ENCODE measurements at regions of chr3 and their contacts with region 1.

Region 1: GRCh38 chr3:5298453-5298852 is 110.9 kb downstream of the EDEM1 start:
- DNase-seq: peak; percentile 69
- ATAC-seq: peak; percentile 98
- H3K4me3 ChIP-seq: no peak overlapping the region
- H3K27ac ChIP-seq: no peak overlapping the region
- H3K4me1 ChIP-seq: peaks cover 14% of the 10 kb centered on the region
- H3K27me3 ChIP-seq: no peaks in the 10 kb centered on the region
- CTCF ChIP-seq: no peak
- EP300 ChIP-seq: peak; percentile 68 to 92; a peak in 3 of 4 replicates
- POLR2A ChIP-seq: no peak
- RAD21 ChIP-seq: no peak

Region 2: DNA sequence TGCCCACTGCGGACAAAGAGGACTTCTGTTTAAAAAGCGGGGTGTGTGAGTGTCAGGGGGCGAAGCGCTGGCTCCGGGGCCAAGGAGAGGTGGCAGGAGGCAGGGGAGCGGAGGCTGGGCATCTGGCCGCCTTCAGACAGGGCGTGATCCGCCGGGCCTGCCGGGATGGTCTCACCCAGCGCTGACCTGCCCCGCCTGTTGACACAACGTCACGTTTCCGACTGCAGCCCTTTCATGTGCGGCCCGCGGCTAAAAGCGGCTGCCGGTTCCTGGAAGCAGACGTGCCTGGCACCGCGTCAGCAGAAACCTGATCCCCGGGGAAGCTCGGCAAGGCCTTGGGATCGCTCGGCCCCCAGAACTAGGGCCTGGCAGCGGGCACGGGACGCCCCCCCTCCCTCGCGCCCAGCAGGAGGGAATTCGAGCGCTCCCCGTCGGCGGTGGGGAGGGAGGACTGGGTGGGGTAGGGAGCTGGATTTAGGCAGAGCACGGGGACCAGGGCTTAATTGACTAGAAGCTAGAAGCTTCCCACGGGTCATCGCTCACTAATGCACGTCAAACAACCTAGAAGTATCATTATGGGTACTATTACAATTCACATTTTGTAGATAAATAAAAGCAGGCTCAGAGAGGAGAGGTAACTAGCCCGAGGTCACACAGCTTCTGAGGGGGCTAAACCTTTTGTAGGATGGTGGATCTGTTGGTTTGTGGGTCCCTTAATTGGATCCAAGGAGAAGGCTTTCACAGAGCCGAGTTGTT is 311.5 kb before region 1 on chr3:
- CTCF ChIA-PET with region 1: no interaction called
- POLR2A ChIA-PET with region 1: no interaction called
- RAD21 ChIA-PET with region 1: no interaction called
- SMC1A ChIA-PET with region 1: no interaction called
- in situ Hi-C with region 1: no loop called
- intact Hi-C with region 1: no loop called
- DNase-seq: no peak
- ATAC-seq: peak; percentile 69
- H3K4me3 ChIP-seq: peak overlapping the region; percentile 70
- H3K27ac ChIP-seq: peak overlapping the region; percentile 86
- H3K4me1 ChIP-seq: peaks cover 38% of the 10 kb centered on the region
- H3K27me3 ChIP-seq: no peaks in the 10 kb centered on the region
- CTCF ChIP-seq: no peak
- EP300 ChIP-seq: 0 out of 4 replicates have a peak, but pooled peaks of 1 of the 2 experiments have one; percentile 58
- POLR2A ChIP-seq: peak; percentile 92
- RAD21 ChIP-seq: no peak; the same call in 1 of the 2 replicates

Region 3: GRCh38 chr3:5122030-5122740 is 176.3 kb before region 1 on chr3 and contains the start of gene ARL8B:
- CTCF ChIA-PET with region 1: interaction called, 5 read pairs
- POLR2A ChIA-PET with region 1: no interaction called
- RAD21 ChIA-PET with region 1: interaction called, 4 read pairs
- SMC1A ChIA-PET with region 1: interaction called, 12 read pairs
- in situ Hi-C with region 1: loop called (anchors 10 kb)
- intact Hi-C with region 1: no loop called
- DNase-seq: no peak
- ATAC-seq: peak; percentile 97
- H3K4me3 ChIP-seq: peak within 1 kb of the TSS; percentile 76
- H3K27ac ChIP-seq: peak within 1 kb of the TSS; percentile 78
- H3K4me1 ChIP-seq: no peaks in the 10 kb centered on the region
- H3K27me3 ChIP-seq: no peaks in the 10 kb centered on the region
- CTCF ChIP-seq: peak; percentile 88 to 99 (median 97); a peak in 5 of 6 replicates
- EP300 ChIP-seq: peak; percentile 36 to 66; a peak in 2 of 4 replicates
- POLR2A ChIP-seq: peak; percentile 98
- RAD21 ChIP-seq: peak; percentile 51; the same call in 1 of the 2 replicates
- polyA plus RNA-seq, gene ARL8B: 36.5 to 38.5 TPM

Region 4: GRCh38 chr3:5205165-5205941 is 93.1 kb before region 1 on chr3:
- CTCF ChIA-PET with region 1: no interaction called
- POLR2A ChIA-PET with region 1: interaction called, 3 read pairs
- RAD21 ChIA-PET with region 1: interaction called, 11 read pairs
- SMC1A ChIA-PET with region 1: interaction called, 8 read pairs
- in situ Hi-C with region 1: no loop called
- intact Hi-C with region 1: no loop called
- DNase-seq: peak; percentile 86
- ATAC-seq: peak; percentile 98
- H3K4me3 ChIP-seq: no peak overlapping the region
- H3K27ac ChIP-seq: peak overlapping the region; percentile 38
- H3K4me1 ChIP-seq: peaks cover 9% of the 10 kb centered on the region
- H3K27me3 ChIP-seq: no peaks in the 10 kb centered on the region
- CTCF ChIP-seq: no peak
- EP300 ChIP-seq: peak; percentile 62 to 88; a peak in 3 of 4 replicates
- POLR2A ChIP-seq: 0 out of 2 replicates have a peak, but pooled peaks have one; percentile 40
- RAD21 ChIP-seq: peak; percentile 29; the same call in 1 of the 2 replicates

Region 5: GRCh38 chr3:5226783-5227182 is 71.7 kb before region 1 on chr3:
- CTCF ChIA-PET with region 1: interaction called, 3 read pairs
- POLR2A ChIA-PET with region 1: no interaction called
- RAD21 ChIA-PET with region 1: interaction called, 13 read pairs
- SMC1A ChIA-PET with region 1: interaction called, 11 read pairs
- in situ Hi-C with region 1: no loop called
- intact Hi-C with region 1: no loop called
- DNase-seq: no peak
- ATAC-seq: peak; percentile 26
- H3K4me3 ChIP-seq: no peak overlapping the region
- H3K27ac ChIP-seq: no peak overlapping the region
- H3K4me1 ChIP-seq: no peaks in the 10 kb centered on the region
- H3K27me3 ChIP-seq: no peaks in the 10 kb centered on the region
- CTCF ChIP-seq: peak; percentile 37 to 60 (median 45); a peak in 5 of 6 replicates
- EP300 ChIP-seq: no peak
- POLR2A ChIP-seq: no peak
- RAD21 ChIP-seq: peak; percentile 88

Region 6: DNA sequence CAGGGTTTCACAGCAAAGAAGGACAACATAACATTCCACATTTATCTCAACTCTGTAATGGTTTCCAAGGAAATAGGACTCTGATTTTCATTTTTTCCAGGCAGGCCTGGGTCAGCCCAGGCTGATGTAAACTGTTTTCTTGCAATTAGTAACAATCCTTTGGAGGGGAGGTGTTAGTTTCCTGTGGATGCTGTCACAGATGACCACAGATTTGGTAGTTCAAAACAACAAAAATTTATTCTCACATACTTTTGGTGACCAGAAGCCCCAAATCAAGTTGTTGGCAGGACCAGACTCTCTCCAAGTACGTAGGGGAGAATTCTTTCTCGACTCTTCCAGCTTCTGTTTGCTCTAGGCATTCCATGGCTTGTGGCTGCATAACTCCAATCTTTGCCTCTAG is 22.9 kb before region 1 on chr3:
- CTCF ChIA-PET with region 1: interaction called, 4 read pairs
- POLR2A ChIA-PET with region 1: interaction called, 4 read pairs
- RAD21 ChIA-PET with region 1: interaction called, 21 read pairs
- SMC1A ChIA-PET with region 1: interaction called, 34 read pairs
- in situ Hi-C with region 1: no loop called
- intact Hi-C with region 1: no loop called
- DNase-seq: no peak
- ATAC-seq: no peak
- H3K4me3 ChIP-seq: no peak overlapping the region
- H3K27ac ChIP-seq: no peak overlapping the region
- H3K4me1 ChIP-seq: no peaks in the 10 kb centered on the region
- H3K27me3 ChIP-seq: no peaks in the 10 kb centered on the region
- CTCF ChIP-seq: no peak
- EP300 ChIP-seq: no peak
- POLR2A ChIP-seq: no peak
- RAD21 ChIP-seq: no peak

Measured in GM12878 (cell line).